Activated B cell treated with CpG ODN at 0.5 μM for 24 hours (primary cell): ENCODE measurements at regions of chr18 and their contacts with region 1.

Region 1: GRCh38 chr18:21740724-21741510 is at the start of gene MIB1:
- DNase-seq: peak; percentile 99
- ATAC-seq: peak; percentile 71
- H3K4me3 Mint-ChIP-seq: peak within 1 kb of the TSS; percentile 97
- H3K27ac Mint-ChIP-seq: peak within 1 kb of the TSS; percentile 97
- H3K4me1 Mint-ChIP-seq: peaks cover 24% of the 10 kb centered on the region
- H3K27me3 Mint-ChIP-seq: no peaks in the 10 kb centered on the region
- CTCF ChIP-seq: no peak
- total RNA-seq, gene MIB1: 21.6 and 22.6 TPM in 2 replicates

Region 2: DNA sequence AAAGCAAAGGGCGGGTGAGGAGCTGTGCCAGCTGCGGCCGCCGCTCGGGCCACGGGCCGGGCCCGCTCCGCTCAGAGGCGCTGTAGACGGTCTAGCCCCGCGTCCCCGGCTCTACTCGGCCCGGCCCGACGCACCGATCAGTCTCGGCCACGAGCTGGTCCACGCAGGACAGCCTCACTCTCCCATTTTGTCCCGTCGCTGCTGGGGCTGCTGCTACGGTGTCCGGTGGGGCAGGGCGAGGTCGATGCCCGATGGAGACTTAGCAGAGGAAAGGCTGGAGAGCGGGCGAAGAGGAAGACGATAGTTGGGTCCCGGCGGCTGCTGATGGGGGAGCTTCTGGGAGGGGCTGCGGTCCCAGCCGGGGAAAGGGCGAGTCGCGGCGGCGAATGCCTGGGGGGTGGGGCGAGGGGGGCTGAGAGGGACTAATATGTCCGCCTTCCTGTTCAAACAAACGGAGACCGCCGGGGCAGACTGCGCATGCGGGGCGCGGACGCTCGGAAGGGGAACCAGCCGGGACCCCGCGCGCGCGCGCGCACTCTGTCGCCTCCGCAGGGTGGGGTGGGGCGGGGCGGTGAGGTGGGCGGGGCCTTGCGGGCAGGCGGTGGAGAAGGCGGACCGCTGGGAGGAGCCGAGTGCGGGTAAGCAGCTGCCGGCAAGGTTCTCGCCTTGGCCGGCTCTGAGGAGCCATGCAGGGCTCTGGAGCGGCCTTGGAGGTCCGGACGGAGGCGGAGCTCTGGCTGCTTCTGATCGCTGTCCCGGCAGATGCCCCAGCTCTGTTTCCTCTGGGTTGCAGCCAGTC is 629.4 kb before region 1 on chr18 and contains the start of gene ROCK1:
- CTCF ChIA-PET with region 1: no interaction called
- POLR2A ChIA-PET with region 1: interaction called, 6 read pairs
- intact Hi-C with region 1: loop called (anchors 1 kb)
- DNase-seq: peak; percentile 98
- ATAC-seq: peak; percentile 89
- H3K4me3 Mint-ChIP-seq: no peak within 1 kb of the TSS
- H3K27ac Mint-ChIP-seq: peak within 1 kb of the TSS; percentile 97
- H3K4me1 Mint-ChIP-seq: peaks cover 13% of the 10 kb centered on the region
- H3K27me3 Mint-ChIP-seq: no peaks in the 10 kb centered on the region
- CTCF ChIP-seq: no peak
- total RNA-seq, gene ROCK1: 58.9 and 68.2 TPM in 2 replicates

Region 3: DNA sequence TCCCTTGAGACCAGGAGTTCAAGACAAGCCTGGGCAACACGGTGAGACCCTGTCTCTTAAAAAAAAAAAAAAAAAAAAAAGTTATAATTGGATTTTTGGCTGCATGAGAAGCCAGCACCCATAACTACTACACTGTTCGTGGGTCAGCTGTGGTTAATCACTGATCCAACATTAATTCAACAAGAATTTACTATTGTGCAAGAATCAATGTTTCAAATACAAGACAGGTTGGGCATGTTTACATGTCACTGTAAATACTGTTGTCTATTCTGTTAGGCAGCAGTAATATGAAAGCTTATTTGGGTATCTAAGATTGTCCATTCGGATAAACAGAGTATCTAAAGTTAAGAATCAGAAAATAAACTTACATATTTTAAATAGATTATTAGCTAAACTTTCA is 202.7 kb before region 1 on chr18:
- CTCF ChIA-PET with region 1: no interaction called
- POLR2A ChIA-PET with region 1: interaction called, 10 read pairs
- intact Hi-C with region 1: no loop called
- DNase-seq: no peak
- ATAC-seq: no peak
- H3K4me3 Mint-ChIP-seq: no peak overlapping the region
- H3K27ac Mint-ChIP-seq: no peak overlapping the region
- H3K4me1 Mint-ChIP-seq: no peaks in the 10 kb centered on the region
- H3K27me3 Mint-ChIP-seq: no peaks in the 10 kb centered on the region
- CTCF ChIP-seq: no peak

Region 4: DNA sequence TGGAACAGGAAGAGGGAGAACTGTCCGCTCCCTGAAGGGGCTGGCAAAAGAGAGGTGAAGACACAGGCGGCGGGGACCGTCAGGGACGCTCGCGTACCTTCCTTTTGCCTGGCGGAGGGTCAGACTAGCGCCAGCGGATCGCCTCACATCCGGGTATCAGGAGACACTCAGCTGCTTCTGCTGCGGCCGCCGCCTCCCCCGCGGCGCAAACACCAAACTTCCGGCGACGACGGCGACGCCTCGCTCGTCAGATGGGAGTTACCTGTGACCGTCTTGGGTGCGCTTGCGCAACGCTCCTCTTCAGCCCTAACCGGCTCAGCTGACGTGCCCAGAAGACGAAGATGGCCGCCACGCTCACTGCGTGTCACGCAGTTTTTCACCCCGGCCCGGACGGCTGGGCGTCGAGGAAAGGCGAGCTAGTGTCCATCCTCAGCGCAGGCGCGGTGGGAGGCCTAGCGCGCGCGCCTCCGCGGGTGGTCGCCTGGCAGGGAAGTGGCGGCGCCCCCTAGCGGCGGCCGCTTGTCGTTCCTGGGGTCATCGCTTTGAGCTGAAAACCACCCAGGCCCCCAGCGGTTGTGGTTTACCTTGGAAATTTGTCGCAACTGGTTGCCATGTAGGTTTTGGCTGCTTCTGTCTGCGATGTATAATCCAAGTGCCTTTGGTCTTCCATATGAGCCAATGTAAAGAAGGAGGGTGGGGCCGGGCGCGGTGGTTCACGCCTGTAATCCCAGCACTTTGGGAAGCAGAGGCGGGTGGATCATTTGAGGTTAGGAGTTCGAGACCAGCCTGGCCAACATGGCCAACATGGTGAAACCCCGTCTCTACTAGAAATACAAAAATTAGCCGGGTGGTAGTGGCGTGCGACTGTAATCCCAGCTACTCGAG is 140.1 kb before region 1 on chr18 and contains the start of gene ESCO1:
- CTCF ChIA-PET with region 1: interaction called, 4 read pairs
- POLR2A ChIA-PET with region 1: interaction called, 44 read pairs
- intact Hi-C with region 1: loop called (anchors 1 kb)
- DNase-seq: peak; percentile 88
- ATAC-seq: peak; percentile 80
- H3K4me3 Mint-ChIP-seq: peak within 1 kb of the TSS; percentile 96
- H3K27ac Mint-ChIP-seq: peak within 1 kb of the TSS; percentile 99
- H3K4me1 Mint-ChIP-seq: peaks cover 50% of the 10 kb centered on the region
- H3K27me3 Mint-ChIP-seq: no peaks in the 10 kb centered on the region
- CTCF ChIP-seq: peak; percentile 78
- total RNA-seq, gene ESCO1: 18.2 and 19.6 TPM in 2 replicates

Region 5: GRCh38 chr18:21612125-21612991 is 128.6 kb before region 1 on chr18 and contains the start of gene SNRPD1:
- CTCF ChIA-PET with region 1: no interaction called
- POLR2A ChIA-PET with region 1: interaction called, 7 read pairs
- intact Hi-C with region 1: loop called (anchors 1 kb)
- DNase-seq: peak; percentile 95
- ATAC-seq: peak; percentile 100
- H3K4me3 Mint-ChIP-seq: peak within 1 kb of the TSS; percentile 98
- H3K27ac Mint-ChIP-seq: peak within 1 kb of the TSS; percentile 99
- H3K4me1 Mint-ChIP-seq: peaks cover 35% of the 10 kb centered on the region
- H3K27me3 Mint-ChIP-seq: no peaks in the 10 kb centered on the region
- CTCF ChIP-seq: peak; percentile 47
- total RNA-seq, gene SNRPD1: 58.1 and 60.8 TPM in 2 replicates

Region 6: DNA sequence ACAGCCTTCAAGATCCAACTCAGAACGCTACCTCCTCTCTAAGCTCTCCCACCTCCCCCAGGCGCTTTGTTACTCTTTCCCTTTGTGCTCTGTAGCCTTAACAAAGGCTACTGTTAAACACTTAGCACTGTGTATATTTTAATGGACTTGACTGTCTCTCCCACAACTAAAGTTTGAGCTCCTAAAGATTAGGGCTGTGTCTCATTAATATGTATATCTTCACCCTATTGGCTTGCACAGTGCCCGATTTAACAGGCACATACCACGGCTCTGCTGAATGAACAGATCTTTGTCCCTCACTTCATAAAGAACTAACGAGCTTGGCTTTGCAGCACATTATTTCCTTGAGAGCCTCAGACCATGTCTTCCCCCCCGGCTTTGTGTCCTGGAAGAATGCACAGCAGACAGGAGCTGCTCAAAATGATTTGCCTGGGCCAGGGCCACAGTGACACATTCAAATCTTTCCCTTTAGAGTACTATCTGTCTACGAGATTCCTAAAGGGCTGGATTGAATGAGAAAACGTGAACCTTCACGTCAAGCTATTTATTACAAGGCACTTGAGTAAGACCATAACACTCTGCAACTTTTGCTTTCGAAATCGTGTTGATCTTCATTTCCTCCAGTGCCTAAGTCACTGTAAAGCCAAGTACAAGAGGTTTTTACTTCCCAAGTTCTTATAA is 58.4 kb before region 1 on chr18:
- CTCF ChIA-PET with region 1: no interaction called
- POLR2A ChIA-PET with region 1: interaction called, 4 read pairs
- intact Hi-C with region 1: loop called (anchors 1 kb)
- DNase-seq: no peak
- ATAC-seq: peak; percentile 54
- H3K4me3 Mint-ChIP-seq: no peak overlapping the region
- H3K27ac Mint-ChIP-seq: no peak overlapping the region
- H3K4me1 Mint-ChIP-seq: peaks cover 30% of the 10 kb centered on the region
- H3K27me3 Mint-ChIP-seq: no peaks in the 10 kb centered on the region
- CTCF ChIP-seq: no peak

Region 7: GRCh38 chr18:21763846-21764646 is 23.1 kb after region 1 on chr18:
- CTCF ChIA-PET with region 1: no interaction called
- POLR2A ChIA-PET with region 1: no interaction called
- intact Hi-C with region 1: no loop called
- DNase-seq: no peak
- ATAC-seq: no peak
- H3K4me3 Mint-ChIP-seq: no peak overlapping the region
- H3K27ac Mint-ChIP-seq: no peak overlapping the region
- H3K4me1 Mint-ChIP-seq: peaks cover 16% of the 10 kb centered on the region
- H3K27me3 Mint-ChIP-seq: no peaks in the 10 kb centered on the region
- CTCF ChIP-seq: no peak

Region 8: DNA sequence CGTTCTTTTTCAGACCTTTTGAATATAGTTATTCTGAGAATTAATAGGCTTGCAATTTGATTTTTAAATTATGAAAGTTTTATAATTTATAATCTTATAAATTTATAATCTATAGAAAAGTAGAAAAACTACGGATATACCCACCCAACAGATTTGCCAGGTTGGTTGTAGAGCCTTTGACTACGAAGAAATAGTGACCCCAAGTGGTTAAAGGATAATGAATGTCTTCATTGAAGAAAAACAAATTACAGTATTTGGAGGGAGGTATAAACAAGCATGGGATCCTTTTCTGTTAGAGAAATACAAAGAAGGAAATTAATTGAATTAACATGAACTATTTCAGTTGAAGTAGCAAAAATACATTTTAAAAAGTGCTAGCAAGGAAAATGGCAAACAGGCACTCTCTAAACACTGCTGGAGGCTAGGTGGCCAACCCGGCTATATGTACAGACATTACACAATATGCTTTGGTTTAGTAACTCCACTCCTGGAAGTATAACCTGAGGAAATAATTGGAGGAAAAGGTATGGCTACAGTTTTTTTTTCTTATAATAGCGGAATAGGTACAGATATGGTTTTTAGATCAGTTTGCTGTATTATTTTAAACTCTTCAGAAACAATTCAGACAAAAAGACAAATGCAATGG is 110.5 kb after region 1 on chr18:
- CTCF ChIA-PET with region 1: no interaction called
- POLR2A ChIA-PET with region 1: no interaction called
- intact Hi-C with region 1: loop called (anchors 5 kb)
- DNase-seq: no peak
- ATAC-seq: no peak
- H3K4me3 Mint-ChIP-seq: no peak overlapping the region
- H3K27ac Mint-ChIP-seq: no peak overlapping the region
- H3K4me1 Mint-ChIP-seq: peaks cover 20% of the 10 kb centered on the region
- H3K27me3 Mint-ChIP-seq: no peaks in the 10 kb centered on the region
- CTCF ChIP-seq: no peak

Region 9: GRCh38 chr18:22200611-22201225 is 459.8 kb after region 1 on chr18:
- CTCF ChIA-PET with region 1: no interaction called
- POLR2A ChIA-PET with region 1: no interaction called
- intact Hi-C with region 1: no loop called
- DNase-seq: no peak
- ATAC-seq: no peak
- H3K4me3 Mint-ChIP-seq: no peak overlapping the region
- H3K27ac Mint-ChIP-seq: no peak overlapping the region
- H3K4me1 Mint-ChIP-seq: no peaks in the 10 kb centered on the region
- H3K27me3 Mint-ChIP-seq: peaks cover 13% of the 10 kb centered on the region
- CTCF ChIP-seq: no peak